Naive thymus-derived CD4-positive, alpha-beta T cell (primary cell): ENCODE measurements at regions of chr4 and their contacts with region 1.

Region 1: DNA sequence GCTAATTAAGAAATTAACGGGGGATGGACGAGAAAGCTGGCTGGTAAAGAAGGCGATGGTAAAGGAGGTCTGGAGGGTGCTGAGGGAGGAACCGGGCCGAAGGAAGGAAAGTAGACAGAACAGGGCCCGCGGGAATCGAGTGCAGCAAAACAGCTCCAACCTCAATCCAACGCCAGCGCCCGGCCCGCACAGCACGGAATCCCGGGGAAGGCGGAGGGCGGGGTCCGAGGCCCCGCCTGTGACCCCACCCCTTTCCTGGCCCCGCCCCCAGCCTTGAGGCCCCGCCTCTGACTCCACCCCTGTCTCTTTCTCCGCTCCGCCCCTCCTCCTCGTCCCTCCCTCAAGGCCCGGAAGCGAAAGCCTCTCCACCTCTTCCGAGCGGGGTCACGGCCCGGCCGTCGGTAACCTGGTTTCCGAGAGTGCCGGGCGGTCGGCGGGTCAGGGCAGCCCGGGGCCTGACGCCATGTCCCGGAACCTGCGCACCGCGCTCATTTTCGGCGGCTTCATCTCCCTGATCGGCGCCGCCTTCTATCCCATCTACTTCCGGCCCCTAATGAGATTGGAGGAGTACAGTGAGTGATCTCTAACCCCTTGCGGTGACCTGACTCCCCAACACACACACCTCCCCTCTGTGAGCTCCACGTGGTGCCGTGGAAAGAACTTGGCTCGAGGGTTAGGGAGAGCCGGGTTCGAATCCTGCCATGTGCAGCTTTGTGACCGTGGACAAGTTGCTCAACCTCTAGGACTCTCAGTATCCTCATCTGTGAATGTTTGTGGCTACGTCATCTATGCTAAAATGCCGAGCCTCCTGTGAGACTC is at the start of gene SMIM20:
- DNase-seq: peak; percentile 84 to 92 (median 90)
- ATAC-seq: peak; percentile 98
- H3K4me3 ChIP-seq: peak within 1 kb of the TSS; percentile 86
- H3K4me3 Mint-ChIP-seq: peak within 1 kb of the TSS; percentile 88 to 99 (median 96)
- H3K27ac ChIP-seq: peak within 1 kb of the TSS; percentile 82
- H3K27ac Mint-ChIP-seq: peak within 1 kb of the TSS; percentile 95 to 99 (median 98)
- H3K4me1 ChIP-seq: peaks cover 11 to 16% of the 10 kb centered on the region in 2 donors
- H3K4me1 Mint-ChIP-seq: peaks cover 13 to 27% (median 19%) of the 10 kb centered on the region in 7 donors
- H3K27me3 ChIP-seq: no peaks in the 10 kb centered on the region
- H3K27me3 Mint-ChIP-seq: peaks cover 0 to 7% (median 0%) of the 10 kb centered on the region in 5 donors
- total RNA-seq, gene SMIM20: 11.6 to 22.8 (median 14.5) TPM

Region 2: GRCh38 chr4:24226023-24226422 is 1688.0 kb before region 1 on chr4:
- CTCF ChIA-PET with region 1: no interaction called
- POLR2A ChIA-PET with region 1: no interaction called
- intact Hi-C with region 1: no loop called
- DNase-seq: no peak
- ATAC-seq: no peak
- H3K4me3 ChIP-seq: no peak overlapping the region
- H3K4me3 Mint-ChIP-seq: no peak overlapping the region
- H3K27ac ChIP-seq: no peak overlapping the region
- H3K27ac Mint-ChIP-seq: no peak overlapping the region
- H3K4me1 ChIP-seq: no peaks in the 10 kb centered on the region
- H3K4me1 Mint-ChIP-seq: peaks cover 0 to 2% (median 0%) of the 10 kb centered on the region in 7 donors
- H3K27me3 ChIP-seq: no peaks in the 10 kb centered on the region
- H3K27me3 Mint-ChIP-seq: peaks cover 0 to 17% (median 0%) of the 10 kb centered on the region in 5 donors

Region 3: DNA sequence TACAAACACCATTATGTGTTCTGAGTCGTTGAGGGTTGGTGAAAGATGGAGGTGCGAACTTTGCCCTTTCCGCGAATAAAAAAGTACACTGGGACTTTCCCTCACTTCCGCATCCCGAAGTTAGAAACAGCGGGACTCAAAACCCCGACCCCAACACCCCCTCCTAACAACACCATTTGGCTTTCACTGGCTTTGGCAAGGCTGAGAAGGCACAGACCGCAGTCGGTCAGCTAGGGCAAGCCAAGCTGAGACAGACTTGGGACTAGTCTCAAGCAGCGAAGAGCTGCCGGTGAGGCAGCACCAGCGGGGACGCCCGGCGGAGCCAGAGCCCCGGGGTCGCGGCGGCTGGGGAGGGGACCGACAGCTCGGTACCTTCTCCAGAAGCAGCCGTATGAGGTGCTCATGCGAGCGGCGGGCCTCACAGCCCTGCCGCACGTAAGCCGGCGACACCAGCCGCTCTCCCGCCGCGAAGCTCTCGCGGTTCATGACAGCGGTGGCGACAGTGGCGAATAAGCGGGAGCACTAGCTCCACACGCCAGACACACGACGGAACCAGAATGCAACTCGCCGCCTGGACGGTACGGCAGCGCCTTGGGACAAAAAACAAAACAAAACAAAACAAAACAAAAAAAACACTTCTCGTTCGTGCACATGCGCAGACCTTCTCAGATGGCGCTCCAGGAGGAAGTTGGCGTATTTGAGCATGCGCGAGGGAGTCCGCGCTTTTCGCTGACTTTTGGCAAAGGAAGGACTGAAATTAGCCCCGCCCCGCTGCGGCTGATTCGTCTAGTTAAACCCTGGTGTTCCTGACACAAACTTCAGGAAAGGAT is 754.0 kb before region 1 on chr4 and contains the start of gene SEPSECS:
- CTCF ChIA-PET with region 1: no interaction called
- POLR2A ChIA-PET with region 1: no interaction called
- intact Hi-C with region 1: loop called (anchors 1 kb)
- DNase-seq: peak; percentile 82 to 96 (median 94)
- ATAC-seq: peak; percentile 89
- H3K4me3 ChIP-seq: peak within 1 kb of the TSS; percentile 75
- H3K4me3 Mint-ChIP-seq: peak within 1 kb of the TSS; percentile 87 to 97 (median 94)
- H3K27ac ChIP-seq: peak within 1 kb of the TSS; percentile 97
- H3K27ac Mint-ChIP-seq: peak within 1 kb of the TSS; percentile 93 to 98 (median 96)
- H3K4me1 ChIP-seq: peaks cover 4 to 14% of the 10 kb centered on the region in 2 donors
- H3K4me1 Mint-ChIP-seq: peaks cover 33 to 66% (median 52%) of the 10 kb centered on the region in 7 donors
- H3K27me3 ChIP-seq: no peaks in the 10 kb centered on the region
- H3K27me3 Mint-ChIP-seq: peaks cover 0 to 2% (median 0%) of the 10 kb centered on the region in 5 donors
- total RNA-seq, gene SEPSECS: 14.4 to 25.0 (median 17.2) TPM

Region 4: GRCh38 chr4:25376754-25377571 is 537.1 kb before region 1 on chr4 and contains the start of gene ANAPC4:
- CTCF ChIA-PET with region 1: no interaction called
- POLR2A ChIA-PET with region 1: no interaction called
- intact Hi-C with region 1: loop called (anchors 1 kb)
- DNase-seq: peak; percentile 85 to 97 (median 92)
- ATAC-seq: peak; percentile 97
- H3K4me3 ChIP-seq: peak within 1 kb of the TSS; percentile 96
- H3K4me3 Mint-ChIP-seq: peak within 1 kb of the TSS in 2 of 10 donors; percentile 78 to 83
- H3K27ac ChIP-seq: peak within 1 kb of the TSS; percentile 76
- H3K27ac Mint-ChIP-seq: peak within 1 kb of the TSS in 7 of 9 donors; percentile 64 to 93 (median 83)
- H3K4me1 ChIP-seq: peaks cover 11 to 17% of the 10 kb centered on the region in 2 donors
- H3K4me1 Mint-ChIP-seq: peaks cover 0 to 18% (median 13%) of the 10 kb centered on the region in 7 donors
- H3K27me3 ChIP-seq: no peaks in the 10 kb centered on the region
- H3K27me3 Mint-ChIP-seq: no peaks in the 10 kb centered on the region
- total RNA-seq, gene ANAPC4: 40.6 to 55.3 (median 50.4) TPM

Region 5: GRCh38 chr4:25862411-25863346 is 51.4 kb before region 1 on chr4 and contains the start of gene SEL1L3:
- CTCF ChIA-PET with region 1: no interaction called
- POLR2A ChIA-PET with region 1: interaction called, 26 read pairs
- intact Hi-C with region 1: loop called (anchors 1 kb)
- DNase-seq: peak in 8 of 9 donors; percentile 13 to 77 (median 29)
- ATAC-seq: peak; percentile 59
- H3K4me3 ChIP-seq: peak within 1 kb of the TSS; percentile 68
- H3K4me3 Mint-ChIP-seq: peak within 1 kb of the TSS; percentile 94 to 100 (median 98)
- H3K27ac ChIP-seq: peak within 1 kb of the TSS; percentile 71
- H3K27ac Mint-ChIP-seq: peak within 1 kb of the TSS; percentile 88 to 99 (median 96)
- H3K4me1 ChIP-seq: peaks cover 30 to 32% of the 10 kb centered on the region in 2 donors
- H3K4me1 Mint-ChIP-seq: peaks cover 32 to 44% (median 39%) of the 10 kb centered on the region in 7 donors
- H3K27me3 ChIP-seq: no peaks in the 10 kb centered on the region
- H3K27me3 Mint-ChIP-seq: peaks cover 0 to 3% (median 0%) of the 10 kb centered on the region in 5 donors
- total RNA-seq, gene SEL1L3: 38.1 to 55.8 (median 47.0) TPM

Region 6: DNA sequence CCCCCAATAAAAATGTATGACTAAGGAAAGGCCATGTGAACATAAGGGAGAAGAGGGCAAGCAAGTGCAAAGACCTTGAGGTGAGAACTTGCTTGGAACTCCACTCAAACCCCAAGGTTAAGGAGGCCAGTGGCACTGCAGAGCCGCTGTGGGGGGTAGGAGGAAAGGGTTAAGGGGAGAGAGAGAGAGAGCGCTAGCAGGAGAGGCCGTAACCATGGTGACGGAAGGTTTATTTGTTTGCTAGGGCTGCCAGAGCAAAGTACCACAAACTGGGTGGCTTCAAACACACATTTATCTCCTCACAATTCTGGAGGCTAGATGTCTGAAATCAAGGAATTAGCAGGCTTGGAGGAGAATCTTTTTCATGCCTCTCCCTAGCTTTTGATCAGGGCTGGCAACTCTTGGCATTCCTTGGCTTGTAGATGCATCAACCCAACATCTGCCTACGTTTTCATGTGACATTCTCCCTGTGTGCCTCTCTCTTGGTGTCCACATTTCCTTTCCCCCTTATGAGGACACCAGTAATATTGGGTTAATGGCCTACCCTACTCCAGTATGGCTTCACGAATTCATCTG is 35.2 kb after region 1 on chr4:
- CTCF ChIA-PET with region 1: no interaction called
- POLR2A ChIA-PET with region 1: no interaction called
- intact Hi-C with region 1: no loop called
- DNase-seq: no peak
- ATAC-seq: no peak
- H3K4me3 ChIP-seq: no peak overlapping the region
- H3K4me3 Mint-ChIP-seq: no peak overlapping the region
- H3K27ac ChIP-seq: no peak overlapping the region
- H3K27ac Mint-ChIP-seq: no peak overlapping the region
- H3K4me1 ChIP-seq: peaks cover 0 to 5% of the 10 kb centered on the region in 2 donors
- H3K4me1 Mint-ChIP-seq: peaks cover 6 to 18% (median 12%) of the 10 kb centered on the region in 7 donors
- H3K27me3 ChIP-seq: no peaks in the 10 kb centered on the region
- H3K27me3 Mint-ChIP-seq: peaks cover 23 to 45% (median 30%) of the 10 kb centered on the region in 5 donors

Region 7: GRCh38 chr4:25986807-25987206 is 72.7 kb after region 1 on chr4:
- CTCF ChIA-PET with region 1: interaction called, 3 read pairs
- POLR2A ChIA-PET with region 1: no interaction called
- intact Hi-C with region 1: loop called in 1 of 2 experiments (anchors 5 kb)
- DNase-seq: no peak
- ATAC-seq: no peak
- H3K4me3 ChIP-seq: no peak overlapping the region
- H3K4me3 Mint-ChIP-seq: no peak overlapping the region
- H3K27ac ChIP-seq: no peak overlapping the region
- H3K27ac Mint-ChIP-seq: no peak overlapping the region
- H3K4me1 ChIP-seq: no peaks in the 10 kb centered on the region
- H3K4me1 Mint-ChIP-seq: peaks cover 0 to 8% (median 0%) of the 10 kb centered on the region in 7 donors
- H3K27me3 ChIP-seq: no peaks in the 10 kb centered on the region
- H3K27me3 Mint-ChIP-seq: peaks cover 0 to 6% (median 0%) of the 10 kb centered on the region in 5 donors

Region 8: GRCh38 chr4:26985873-26986272 is 1071.8 kb after region 1 on chr4:
- CTCF ChIA-PET with region 1: no interaction called
- POLR2A ChIA-PET with region 1: no interaction called
- intact Hi-C with region 1: loop called in 1 of 2 experiments (anchors 5 kb)
- DNase-seq: peak in 8 of 9 donors; percentile 33 to 71 (median 59)
- ATAC-seq: peak; percentile 95
- H3K4me3 ChIP-seq: peak overlapping the region; percentile 11
- H3K4me3 Mint-ChIP-seq: peak overlapping the region in 9 of 10 donors; percentile 19 to 72 (median 63)
- H3K27ac ChIP-seq: no peak overlapping the region
- H3K27ac Mint-ChIP-seq: peak overlapping the region in 6 of 9 donors; percentile 2 to 39 (median 10)
- H3K4me1 ChIP-seq: peaks cover 8 to 22% of the 10 kb centered on the region in 2 donors
- H3K4me1 Mint-ChIP-seq: peaks cover 19 to 78% (median 72%) of the 10 kb centered on the region in 7 donors
- H3K27me3 ChIP-seq: no peaks in the 10 kb centered on the region
- H3K27me3 Mint-ChIP-seq: no peaks in the 10 kb centered on the region